ENCODE measurements at regions of chr10 and their contacts with region 1.

Region 1: GRCh38 chr10:110304780-110305421 is at the start of gene SMNDC1:
- DNase-seq: peak; percentile 97
- ATAC-seq: peak; percentile 92
- H3K4me3 ChIP-seq: peak within 1 kb of the TSS; percentile 90
- H3K27ac ChIP-seq: peak within 1 kb of the TSS; percentile 76
- H3K4me1 ChIP-seq: peaks cover 4% of the 10 kb centered on the region; the same call in 1 of the 2 replicates
- H3K27me3 ChIP-seq: no peaks in the 10 kb centered on the region
- CTCF ChIP-seq: no peak
- POLR2A ChIP-seq: peak; percentile 81; the same call in 1 of the 2 replicates
- RAD21 ChIP-seq: no peak
- total RNA-seq, gene SMNDC1: 3.9 and 8.6 TPM in 2 replicates

Region 2: DNA sequence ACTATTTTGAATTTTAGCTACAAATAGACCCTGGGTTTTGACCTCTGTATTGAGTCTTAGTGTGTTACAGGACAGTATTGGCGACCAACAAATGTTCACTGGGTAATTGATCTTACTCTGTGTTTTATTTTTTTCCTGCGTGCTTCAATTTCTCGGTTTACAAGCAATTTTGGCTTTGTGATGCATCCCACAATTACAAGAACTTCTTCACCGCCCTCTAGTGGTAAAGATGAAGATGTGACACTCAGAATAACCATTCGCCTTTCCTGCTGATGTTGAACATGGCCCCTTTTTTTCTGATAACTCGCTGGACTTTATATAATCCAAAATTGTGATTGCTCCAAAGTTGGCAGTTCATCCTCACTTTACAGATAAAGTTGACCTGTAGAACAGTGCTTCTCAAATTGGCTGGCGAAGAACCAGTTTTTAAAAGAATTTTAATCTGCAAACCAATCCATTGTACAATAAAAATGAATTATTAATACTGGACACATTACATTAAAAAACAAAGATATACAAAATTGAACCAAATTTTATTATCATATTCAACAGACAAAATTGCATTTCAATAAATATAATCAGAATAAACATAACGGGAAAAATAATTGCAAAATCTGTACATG is 242.3 kb after region 1 on chr10:
- CTCF ChIA-PET with region 1: interaction called, 4 read pairs
- POLR2A ChIA-PET with region 1: interaction called, 3 read pairs
- dilution Hi-C with region 1: no loop called
- in situ Hi-C with region 1: loop called (anchors 5 kb)
- intact Hi-C with region 1: loop called (anchors 1 kb)
- DNase-seq: peak; percentile 77
- ATAC-seq: peak; percentile 73
- H3K4me3 ChIP-seq: no peak overlapping the region
- H3K27ac ChIP-seq: no peak overlapping the region
- H3K4me1 ChIP-seq: peaks cover 2% of the 10 kb centered on the region; the same call in 1 of the 2 replicates
- H3K27me3 ChIP-seq: peaks cover 2% of the 10 kb centered on the region; the same call in 1 of the 2 replicates
- CTCF ChIP-seq: peak; percentile 82
- POLR2A ChIP-seq: no peak
- RAD21 ChIP-seq: peak; percentile 86

Region 3: GRCh38 chr10:110600487-110601101 is 295.7 kb after region 1 on chr10:
- CTCF ChIA-PET with region 1: interaction called, 7 read pairs
- POLR2A ChIA-PET with region 1: no interaction called
- dilution Hi-C with region 1: no loop called
- in situ Hi-C with region 1: no loop called
- intact Hi-C with region 1: loop called (anchors 1 kb)
- DNase-seq: peak; percentile 71
- ATAC-seq: peak; percentile 42
- H3K4me3 ChIP-seq: no peak overlapping the region
- H3K27ac ChIP-seq: no peak overlapping the region
- H3K4me1 ChIP-seq: no peaks in the 10 kb centered on the region
- H3K27me3 ChIP-seq: no peaks in the 10 kb centered on the region
- CTCF ChIP-seq: peak; percentile 52
- POLR2A ChIP-seq: no peak
- RAD21 ChIP-seq: peak; percentile 63

Region 4: DNA sequence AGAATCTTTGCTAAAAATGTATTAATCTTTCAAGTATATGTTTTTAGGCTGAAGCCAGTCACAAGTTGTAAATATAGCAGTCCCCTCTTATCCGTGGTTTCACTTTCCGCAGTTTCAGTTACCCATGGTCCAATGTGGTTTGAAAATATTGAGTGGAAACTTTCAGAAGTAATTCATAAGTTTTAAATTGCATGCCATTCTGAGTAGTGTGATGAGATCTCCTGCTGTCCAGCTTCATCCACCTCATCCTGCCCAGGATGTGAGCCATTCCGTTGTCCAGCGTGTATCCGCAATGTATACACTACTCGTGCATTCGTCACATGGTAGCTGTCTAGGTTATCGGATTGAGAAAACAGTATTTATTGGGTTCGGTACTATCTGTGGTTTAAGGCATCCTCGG is 579.0 kb after region 1 on chr10:
- CTCF ChIA-PET with region 1: no interaction called
- POLR2A ChIA-PET with region 1: no interaction called
- dilution Hi-C with region 1: no loop called
- in situ Hi-C with region 1: loop called (anchors 10 kb)
- intact Hi-C with region 1: no loop called
- DNase-seq: peak; percentile 66
- ATAC-seq: peak; percentile 59; the same call in 1 of the 2 replicates
- H3K4me3 ChIP-seq: no peak overlapping the region
- H3K27ac ChIP-seq: no peak overlapping the region
- H3K4me1 ChIP-seq: peaks cover 2% of the 10 kb centered on the region; the same call in 1 of the 2 replicates
- H3K27me3 ChIP-seq: no peaks in the 10 kb centered on the region
- CTCF ChIP-seq: no peak
- POLR2A ChIP-seq: no peak
- RAD21 ChIP-seq: no peak

Region 5: GRCh38 chr10:111113961-111114757 is 809.3 kb after region 1 on chr10:
- CTCF ChIA-PET with region 1: no interaction called
- POLR2A ChIA-PET with region 1: no interaction called
- dilution Hi-C with region 1: no loop called
- in situ Hi-C with region 1: no loop called
- intact Hi-C with region 1: no loop called
- DNase-seq: no peak
- ATAC-seq: no peak
- H3K4me3 ChIP-seq: no peak overlapping the region
- H3K27ac ChIP-seq: no peak overlapping the region
- H3K4me1 ChIP-seq: no peaks in the 10 kb centered on the region
- H3K27me3 ChIP-seq: no peaks in the 10 kb centered on the region
- CTCF ChIP-seq: no peak
- POLR2A ChIP-seq: no peak
- RAD21 ChIP-seq: no peak

Region 6: DNA sequence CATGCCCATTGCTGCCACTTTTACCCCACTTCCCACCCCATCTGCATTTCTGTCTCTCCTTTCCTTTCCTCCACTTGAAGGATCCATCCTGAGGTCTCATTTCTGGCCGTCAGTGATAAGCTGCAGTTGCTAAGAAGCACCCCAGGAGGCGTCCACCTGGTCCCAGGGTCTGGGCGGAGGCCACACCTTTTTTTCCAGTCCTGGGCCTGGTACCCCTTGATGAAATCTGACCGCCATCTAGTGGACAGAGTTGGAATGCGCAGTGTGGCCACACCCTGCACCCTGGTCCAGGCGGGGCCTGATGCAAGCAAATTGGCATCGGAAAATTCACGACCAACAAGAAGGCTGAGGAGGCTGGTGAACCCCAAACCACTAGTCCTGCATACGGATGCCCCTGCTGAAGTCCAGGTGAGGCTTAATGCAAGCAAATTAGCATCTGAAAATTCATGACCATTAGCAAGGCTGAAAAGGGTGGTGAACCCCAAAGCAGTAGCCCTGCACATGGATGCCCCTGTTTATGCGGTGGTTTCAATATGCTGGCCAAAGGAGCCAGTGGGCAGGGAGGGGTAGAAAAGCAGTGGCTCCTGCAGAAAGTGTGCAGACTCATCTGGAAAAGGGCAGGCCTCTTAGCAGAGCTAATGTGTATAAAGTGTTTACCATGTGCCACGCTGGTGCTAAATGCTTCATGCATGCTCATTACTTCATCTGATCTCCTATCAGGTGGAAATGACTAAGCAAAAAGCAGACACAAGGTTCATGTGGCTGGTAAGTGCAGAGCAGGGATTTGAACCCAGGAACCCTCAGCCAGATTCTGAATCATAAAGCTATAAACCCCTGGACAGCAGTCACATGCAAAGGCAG is 1835.4 kb after region 1 on chr10:
- CTCF ChIA-PET with region 1: no interaction called
- POLR2A ChIA-PET with region 1: no interaction called
- dilution Hi-C with region 1: no loop called
- in situ Hi-C with region 1: loop called (anchors 25 kb)
- intact Hi-C with region 1: no loop called
- DNase-seq: peak; percentile 59
- ATAC-seq: peak; percentile 96
- H3K4me3 ChIP-seq: no peak overlapping the region
- H3K27ac ChIP-seq: no peak overlapping the region
- H3K4me1 ChIP-seq: no peaks in the 10 kb centered on the region
- H3K27me3 ChIP-seq: no peaks in the 10 kb centered on the region; the same call in 1 of the 2 replicates
- CTCF ChIP-seq: peak; percentile 83
- POLR2A ChIP-seq: no peak
- RAD21 ChIP-seq: peak; percentile 69

Measured in IMR-90 (cell line).